ENCODE measurements at regions of chr11 and their contacts with region 1.

Region 1: DNA sequence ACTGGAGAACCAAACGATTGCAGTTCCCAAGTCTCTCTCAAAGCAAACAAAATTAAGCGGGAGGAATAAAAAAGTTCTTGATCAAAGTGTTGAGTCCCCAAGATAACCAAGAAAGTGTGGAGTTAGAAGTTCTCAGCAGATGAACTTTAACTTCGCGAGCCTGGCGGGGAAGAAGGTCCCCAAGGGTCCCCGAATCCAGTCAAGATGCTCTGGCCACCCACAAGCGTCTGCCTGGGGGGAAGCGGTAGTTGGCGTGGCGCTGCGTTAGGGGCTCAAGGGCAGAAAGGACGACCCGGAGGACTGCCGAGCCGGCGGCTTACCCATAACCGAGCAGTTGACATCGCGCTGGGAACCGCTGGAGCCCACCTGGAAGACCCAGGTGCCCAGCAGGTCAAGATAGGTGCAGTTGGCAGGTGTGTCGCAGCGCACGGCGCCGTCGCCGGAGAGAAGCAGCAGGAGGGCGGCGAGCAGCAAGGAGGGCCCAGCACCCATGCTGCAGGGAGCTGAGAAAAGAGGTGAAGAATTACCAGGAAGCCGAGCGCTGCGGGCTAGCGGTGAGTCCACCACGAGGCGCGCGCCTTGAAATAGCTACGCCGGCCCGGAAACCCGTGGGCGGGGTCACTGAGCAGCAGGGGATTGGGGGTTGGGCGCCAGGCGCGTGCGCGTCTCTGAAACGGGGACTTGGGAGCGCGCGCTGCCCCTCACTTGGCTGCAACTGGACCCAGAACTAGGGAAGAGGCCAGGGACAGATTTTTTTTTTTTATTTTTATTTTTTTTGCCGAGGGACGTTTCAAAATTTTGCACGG is at the start of gene CTSC:
- DNase-seq: peak; percentile 92 to 93
- ATAC-seq: peak; percentile 97 to 99 (median 98)
- H3K4me3 ChIP-seq: peak within 1 kb of the TSS; percentile 18 to 87 (median 66)
- H3K27ac ChIP-seq: peak within 1 kb of the TSS in 8 of 10 donors; percentile 63 to 92 (median 76)
- H3K4me1 ChIP-seq: peaks cover 0 to 58% (median 5%) of the 10 kb centered on the region in 9 donors
- H3K27me3 ChIP-seq: no peaks in the 10 kb centered on the region
- CTCF ChIP-seq: peak in 2 of 9 donors; percentile 11 to 23
- total RNA-seq, gene CTSC: 6.3 to 161 (median 12.4) TPM

Region 2: GRCh38 chr11:88246696-88247095 is 90.7 kb before region 1 on chr11:
- intact Hi-C with region 1: no loop called
- DNase-seq: no peak
- ATAC-seq: peak in 1 of 8 donors; percentile 67
- H3K4me3 ChIP-seq: no peak overlapping the region
- H3K27ac ChIP-seq: no peak overlapping the region
- H3K4me1 ChIP-seq: peaks cover 0 to 3% (median 0%) of the 10 kb centered on the region in 9 donors
- H3K27me3 ChIP-seq: no peaks in the 10 kb centered on the region
- CTCF ChIP-seq: no peak

Region 3: GRCh38 chr11:88402192-88402715 is 64.9 kb after region 1 on chr11:
- intact Hi-C with region 1: loop called in 1 of 10 experiments (anchors 5 kb)
- DNase-seq: no peak
- ATAC-seq: peak in 3 of 8 donors; percentile 30 to 61 (median 52)
- H3K4me3 ChIP-seq: no peak overlapping the region
- H3K27ac ChIP-seq: peak overlapping the region in 8 of 10 donors; percentile 6 to 70 (median 18)
- H3K4me1 ChIP-seq: peaks cover 0 to 54% (median 0%) of the 10 kb centered on the region in 9 donors
- H3K27me3 ChIP-seq: no peaks in the 10 kb centered on the region
- CTCF ChIP-seq: no peak

Region 4: GRCh38 chr11:88421530-88421929 is 84.1 kb after region 1 on chr11:
- intact Hi-C with region 1: loop called in 3 of 10 experiments (anchors 2 to 5 kb)
- DNase-seq: peak in 1 of 2 donors; percentile 29
- ATAC-seq: peak; percentile 40 to 80 (median 62)
- H3K4me3 ChIP-seq: no peak overlapping the region
- H3K27ac ChIP-seq: peak overlapping the region; percentile 29 to 86 (median 68)
- H3K4me1 ChIP-seq: peaks cover 0 to 41% (median 10%) of the 10 kb centered on the region in 9 donors
- H3K27me3 ChIP-seq: no peaks in the 10 kb centered on the region
- CTCF ChIP-seq: no peak

Region 5: GRCh38 chr11:88454881-88455280 is 117.5 kb after region 1 on chr11:
- intact Hi-C with region 1: no loop called
- DNase-seq: no peak
- ATAC-seq: no peak
- H3K4me3 ChIP-seq: no peak overlapping the region
- H3K27ac ChIP-seq: no peak overlapping the region
- H3K4me1 ChIP-seq: no peaks in the 10 kb centered on the region
- H3K27me3 ChIP-seq: no peaks in the 10 kb centered on the region
- CTCF ChIP-seq: no peak